ENCODE measurements at regions of chr2 and their contacts with region 1.

Region 1: GRCh38 chr2:120964819-120965218 is 229.2 kb downstream of the GLI2 start:
- DNase-seq: no peak
- H3K4me3 ChIP-seq: no peak overlapping the region
- H3K27ac ChIP-seq: no peak overlapping the region
- H3K4me1 ChIP-seq: no peaks in the 10 kb centered on the region
- H3K27me3 ChIP-seq: no peaks in the 10 kb centered on the region
- CTCF ChIP-seq: no peak

Region 2: DNA sequence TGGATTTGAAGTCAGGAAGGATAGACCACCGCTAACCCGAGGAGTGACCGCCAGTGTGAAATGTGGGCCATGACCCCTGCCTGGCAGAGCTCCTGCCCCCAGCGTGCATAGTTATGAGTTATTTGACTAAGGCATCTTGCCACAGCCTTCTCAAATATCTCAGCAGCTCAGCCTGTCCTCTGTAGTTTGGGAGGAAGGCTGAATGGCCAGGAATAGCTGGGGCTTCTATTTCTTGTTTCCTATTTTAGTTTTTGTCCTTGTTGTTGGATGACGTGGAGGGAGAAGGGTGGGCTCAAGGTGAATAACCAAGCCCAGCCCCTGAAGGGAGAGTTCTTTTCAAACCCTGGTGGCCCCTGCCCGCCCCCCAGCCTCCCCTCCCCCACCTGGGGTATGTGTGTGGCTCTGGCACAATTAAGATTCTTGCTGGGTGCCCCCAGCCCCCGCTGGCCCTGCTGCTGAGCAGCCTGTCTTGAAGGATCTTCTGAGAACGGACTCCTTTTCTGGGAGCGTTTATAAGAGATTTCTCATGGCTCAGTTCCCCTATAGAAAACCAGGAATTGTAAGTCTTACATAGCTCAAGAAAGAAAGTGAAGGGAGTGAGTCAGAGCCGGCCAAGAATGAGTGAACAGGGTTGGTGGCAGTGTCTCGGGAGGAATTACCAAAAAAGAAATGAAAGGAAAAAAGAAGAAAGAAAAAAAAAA is 71.7 kb before region 1 on chr2:
- CTCF ChIA-PET with region 1: no interaction called
- dilution Hi-C with region 1: loop called (anchors 5 kb)
- in situ Hi-C with region 1: no loop called
- intact Hi-C with region 1: no loop called
- DNase-seq: no peak
- H3K4me3 ChIP-seq: no peak overlapping the region
- H3K27ac ChIP-seq: no peak overlapping the region
- H3K4me1 ChIP-seq: no peaks in the 10 kb centered on the region
- H3K27me3 ChIP-seq: no peaks in the 10 kb centered on the region
- CTCF ChIP-seq: no peak

Region 3: GRCh38 chr2:120914839-120915521 is 49.8 kb before region 1 on chr2:
- CTCF ChIA-PET with region 1: no interaction called
- dilution Hi-C with region 1: no loop called
- in situ Hi-C with region 1: no loop called
- intact Hi-C with region 1: no loop called
- DNase-seq: peak; percentile 69
- H3K4me3 ChIP-seq: no peak overlapping the region
- H3K27ac ChIP-seq: no peak overlapping the region
- H3K4me1 ChIP-seq: peaks cover 17% of the 10 kb centered on the region
- H3K27me3 ChIP-seq: no peaks in the 10 kb centered on the region
- CTCF ChIP-seq: peak in 1 of 2 donors; percentile 2

Region 4: DNA sequence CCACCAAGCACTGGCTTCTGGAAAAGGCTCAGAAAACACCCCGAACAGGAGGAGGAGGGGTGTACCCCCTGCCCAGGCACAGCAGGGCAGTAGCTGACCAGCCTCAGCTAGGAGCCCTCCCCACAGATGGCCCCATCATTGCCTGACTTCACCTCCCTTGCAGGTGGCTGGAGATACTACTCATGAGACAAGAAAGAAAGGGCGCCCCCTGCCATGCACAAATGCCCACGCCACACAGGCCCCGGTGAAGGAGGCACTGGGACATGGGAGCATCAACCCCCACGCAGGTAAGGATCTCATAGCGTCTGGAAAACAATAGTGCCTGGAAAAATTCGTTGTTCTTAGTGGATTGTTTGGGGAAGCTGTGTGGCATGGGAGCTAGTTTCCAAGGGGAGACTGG is 79.6 kb after region 1 on chr2:
- CTCF ChIA-PET with region 1: no interaction called
- dilution Hi-C with region 1: loop called (anchors 5 kb)
- in situ Hi-C with region 1: no loop called
- intact Hi-C with region 1: no loop called
- DNase-seq: no peak
- H3K4me3 ChIP-seq: no peak overlapping the region
- H3K27ac ChIP-seq: no peak overlapping the region
- H3K4me1 ChIP-seq: no peaks in the 10 kb centered on the region
- H3K27me3 ChIP-seq: no peaks in the 10 kb centered on the region
- CTCF ChIP-seq: peak in 1 of 2 donors; percentile 33